B cell (primary cell): ENCODE measurements at regions of chr18 and their contacts with region 1.

Region 1: GRCh38 chr18:48475635-48476549 is 62.9 kb upstream of the CTIF start:
- DNase-seq: peak; percentile 48
- ATAC-seq: no peak
- H3K4me3 ChIP-seq: no peak overlapping the region
- H3K4me3 Mint-ChIP-seq: no peak overlapping the region
- H3K27ac ChIP-seq: no peak overlapping the region
- H3K27ac Mint-ChIP-seq: no peak overlapping the region
- H3K4me1 ChIP-seq: no peaks in the 10 kb centered on the region
- H3K4me1 Mint-ChIP-seq: no peaks in the 10 kb centered on the region
- H3K27me3 ChIP-seq: peaks cover 0 to 15% (median 3%) of the 10 kb centered on the region in 4 experiments
- H3K27me3 Mint-ChIP-seq: peaks cover 30% of the 10 kb centered on the region
- CTCF ChIP-seq: peak; percentile 61

Region 2: GRCh38 chr18:48319801-48320638 is 155.9 kb before region 1 on chr18:
- CTCF ChIA-PET with region 1: no interaction called
- POLR2A ChIA-PET with region 1: no interaction called
- intact Hi-C with region 1: no loop called
- DNase-seq: no peak
- ATAC-seq: no peak
- H3K4me3 ChIP-seq: no peak overlapping the region
- H3K4me3 Mint-ChIP-seq: no peak overlapping the region
- H3K27ac ChIP-seq: no peak overlapping the region
- H3K27ac Mint-ChIP-seq: no peak overlapping the region
- H3K4me1 ChIP-seq: no peaks in the 10 kb centered on the region
- H3K4me1 Mint-ChIP-seq: no peaks in the 10 kb centered on the region
- H3K27me3 ChIP-seq: no peaks in the 10 kb centered on the region
- H3K27me3 Mint-ChIP-seq: peaks cover 29% of the 10 kb centered on the region
- CTCF ChIP-seq: no peak

Region 3: GRCh38 chr18:48663931-48664847 is 188.3 kb after region 1 on chr18:
- CTCF ChIA-PET with region 1: interaction called, 10 read pairs
- POLR2A ChIA-PET with region 1: no interaction called
- intact Hi-C with region 1: no loop called
- DNase-seq: peak; percentile 40
- ATAC-seq: no peak
- H3K4me3 ChIP-seq: no peak overlapping the region
- H3K4me3 Mint-ChIP-seq: no peak overlapping the region
- H3K27ac ChIP-seq: no peak overlapping the region
- H3K27ac Mint-ChIP-seq: no peak overlapping the region
- H3K4me1 ChIP-seq: peaks cover 4 to 11% of the 10 kb centered on the region in 2 donors
- H3K4me1 Mint-ChIP-seq: peaks cover 19% of the 10 kb centered on the region
- H3K27me3 ChIP-seq: no peaks in the 10 kb centered on the region
- H3K27me3 Mint-ChIP-seq: no peaks in the 10 kb centered on the region
- CTCF ChIP-seq: peak; percentile 73